PC-3 (cell line): ENCODE measurements at regions of chr19 and their contacts with region 1.

Region 1: DNA sequence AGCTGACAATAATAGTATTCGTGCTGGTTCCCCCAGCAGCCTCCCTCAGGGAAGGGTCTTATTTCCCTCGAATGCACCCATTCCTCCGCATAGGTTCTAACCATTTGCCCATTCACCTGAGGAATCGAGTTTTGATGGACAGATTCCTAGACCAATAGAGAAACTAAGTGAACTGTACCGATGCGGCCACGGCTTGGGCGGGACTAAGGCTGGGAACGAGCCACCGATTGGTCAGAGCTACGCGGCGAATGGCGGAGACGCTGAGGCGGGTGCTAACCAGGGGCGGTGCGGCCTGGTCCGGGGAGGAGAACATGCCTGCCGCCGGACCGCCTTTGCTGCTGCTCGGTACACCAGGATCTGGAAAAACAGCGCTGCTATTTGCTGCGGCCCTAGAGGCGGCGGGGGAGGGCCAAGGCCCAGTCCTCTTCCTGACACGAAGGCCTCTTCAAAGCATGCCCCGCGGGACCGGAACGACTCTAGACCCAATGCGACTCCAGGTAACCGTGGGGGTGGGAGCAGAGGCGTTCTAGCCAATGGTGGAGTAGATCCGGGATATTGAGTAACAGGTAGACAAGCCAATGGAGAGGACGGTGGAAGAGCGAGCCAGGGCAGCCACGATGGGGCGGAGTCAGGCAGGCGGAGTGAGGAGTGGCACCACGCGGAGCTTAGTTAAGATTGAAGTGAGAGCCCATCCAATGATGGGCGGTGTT is at the start of gene SWSAP1:
- DNase-seq: peak; percentile 100
- ATAC-seq: peak; percentile 85
- H3K4me3 ChIP-seq: peak within 1 kb of the TSS; percentile 68
- H3K27ac ChIP-seq: peak within 1 kb of the TSS; percentile 79
- H3K4me1 ChIP-seq: peaks cover 49% of the 10 kb centered on the region
- H3K27me3 ChIP-seq: no peaks in the 10 kb centered on the region
- CTCF ChIP-seq: no peak
- total RNA-seq, gene SWSAP1: 5.2 and 6.1 TPM in 2 replicates

Region 2: DNA sequence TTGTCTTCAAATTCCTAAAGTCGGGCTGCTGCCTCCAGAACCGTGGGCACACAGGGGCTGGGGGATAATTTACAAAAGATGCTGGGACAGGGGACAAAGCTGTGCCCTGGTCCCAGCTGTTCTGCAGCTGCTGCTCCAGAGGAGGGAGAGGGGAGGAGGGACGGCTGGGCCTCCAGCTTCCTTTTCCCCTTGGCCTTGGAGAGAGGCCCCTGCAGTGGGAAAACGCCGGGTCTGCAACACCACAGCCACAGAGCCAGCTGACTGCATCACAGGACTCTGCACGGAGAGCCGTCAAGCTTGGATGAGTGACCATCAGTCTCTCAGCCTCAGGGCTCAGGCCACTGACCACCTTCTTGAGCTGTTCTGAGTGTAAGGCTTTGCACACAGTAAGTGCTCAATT is 118.4 kb before region 1 on chr19:
- CTCF ChIA-PET with region 1: no interaction called
- POLR2A ChIA-PET with region 1: no interaction called
- intact Hi-C with region 1: no loop called
- DNase-seq: no peak
- ATAC-seq: no peak
- H3K4me3 ChIP-seq: no peak overlapping the region
- H3K27ac ChIP-seq: no peak overlapping the region
- H3K4me1 ChIP-seq: no peaks in the 10 kb centered on the region
- H3K27me3 ChIP-seq: no peaks in the 10 kb centered on the region
- CTCF ChIP-seq: no peak

Region 3: DNA sequence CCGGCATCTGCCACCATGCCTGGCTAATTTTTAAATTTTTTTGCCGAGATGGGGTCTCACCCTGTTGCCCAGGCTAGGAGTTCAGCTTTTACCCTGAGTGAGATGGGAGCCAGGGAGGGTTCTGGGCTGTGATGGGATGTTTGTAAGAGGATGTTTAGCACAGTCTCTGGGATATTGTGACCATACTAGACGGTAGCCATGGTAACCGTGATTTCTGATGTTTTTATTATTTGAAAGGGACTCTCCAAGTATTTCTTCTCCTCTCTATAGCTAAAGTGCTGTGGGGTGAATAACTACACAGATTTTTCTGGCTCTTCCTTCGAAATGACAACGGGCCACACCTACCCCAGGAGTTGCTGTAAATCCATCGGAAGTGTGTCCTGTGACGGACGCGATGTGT is 68.3 kb before region 1 on chr19:
- CTCF ChIA-PET with region 1: no interaction called
- POLR2A ChIA-PET with region 1: no interaction called
- intact Hi-C with region 1: no loop called
- DNase-seq: no peak
- ATAC-seq: no peak
- H3K4me3 ChIP-seq: no peak overlapping the region
- H3K27ac ChIP-seq: no peak overlapping the region
- H3K4me1 ChIP-seq: no peaks in the 10 kb centered on the region
- H3K27me3 ChIP-seq: no peaks in the 10 kb centered on the region
- CTCF ChIP-seq: no peak

Region 4: DNA sequence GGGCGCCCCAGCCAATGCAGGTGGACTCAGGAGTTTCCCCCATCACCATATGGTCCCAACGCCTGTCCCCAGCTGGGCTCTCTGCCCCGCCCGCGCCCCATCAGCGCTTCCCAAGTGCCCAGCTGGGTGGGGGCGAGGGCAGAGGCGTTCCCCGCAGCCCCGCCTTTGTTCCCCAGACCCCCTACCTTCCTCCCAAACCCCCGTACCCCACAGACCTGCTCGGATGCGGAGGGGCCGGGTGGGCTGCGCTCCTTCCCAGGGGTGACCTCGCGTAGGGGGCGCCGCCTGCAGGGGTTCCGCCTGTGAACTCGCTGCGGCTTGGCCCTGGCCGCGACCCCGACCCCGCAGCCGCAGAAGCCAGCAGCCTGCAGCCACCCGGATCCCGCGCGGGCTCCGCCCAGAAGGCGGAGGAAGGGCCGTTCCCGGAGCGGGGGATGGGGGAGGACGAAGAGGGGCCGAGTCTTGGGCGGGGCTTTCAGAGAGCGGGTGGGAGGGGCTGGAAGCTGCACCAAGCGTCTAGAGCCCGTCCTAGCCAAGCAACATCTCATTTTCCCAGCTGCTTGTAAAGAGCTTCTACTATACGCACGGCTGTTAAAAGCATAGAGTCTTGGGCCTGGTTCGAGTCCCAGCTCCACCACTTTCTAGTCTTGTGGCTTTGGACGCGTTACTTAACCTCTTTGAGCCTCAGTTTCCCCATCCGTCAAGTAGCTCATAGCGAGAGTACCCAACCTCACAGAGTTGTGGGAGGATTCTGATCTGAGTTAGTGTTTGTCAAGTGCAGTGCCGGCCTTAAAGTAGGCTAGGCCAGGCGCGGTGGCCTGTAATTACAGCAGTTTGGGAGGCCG is 35.1 kb before region 1 on chr19 and contains the start of gene RAB3D:
- CTCF ChIA-PET with region 1: interaction called, 8 read pairs
- POLR2A ChIA-PET with region 1: interaction called, 5 read pairs
- intact Hi-C with region 1: loop called (anchors 1 kb)
- DNase-seq: peak; percentile 95
- ATAC-seq: peak; percentile 89
- H3K4me3 ChIP-seq: peak within 1 kb of the TSS; percentile 89
- H3K27ac ChIP-seq: peak within 1 kb of the TSS; percentile 11
- H3K4me1 ChIP-seq: peaks cover 25% of the 10 kb centered on the region
- H3K27me3 ChIP-seq: no peaks in the 10 kb centered on the region
- CTCF ChIP-seq: no peak
- total RNA-seq, gene RAB3D: 34.4 and 37.9 TPM in 2 replicates

Region 5: DNA sequence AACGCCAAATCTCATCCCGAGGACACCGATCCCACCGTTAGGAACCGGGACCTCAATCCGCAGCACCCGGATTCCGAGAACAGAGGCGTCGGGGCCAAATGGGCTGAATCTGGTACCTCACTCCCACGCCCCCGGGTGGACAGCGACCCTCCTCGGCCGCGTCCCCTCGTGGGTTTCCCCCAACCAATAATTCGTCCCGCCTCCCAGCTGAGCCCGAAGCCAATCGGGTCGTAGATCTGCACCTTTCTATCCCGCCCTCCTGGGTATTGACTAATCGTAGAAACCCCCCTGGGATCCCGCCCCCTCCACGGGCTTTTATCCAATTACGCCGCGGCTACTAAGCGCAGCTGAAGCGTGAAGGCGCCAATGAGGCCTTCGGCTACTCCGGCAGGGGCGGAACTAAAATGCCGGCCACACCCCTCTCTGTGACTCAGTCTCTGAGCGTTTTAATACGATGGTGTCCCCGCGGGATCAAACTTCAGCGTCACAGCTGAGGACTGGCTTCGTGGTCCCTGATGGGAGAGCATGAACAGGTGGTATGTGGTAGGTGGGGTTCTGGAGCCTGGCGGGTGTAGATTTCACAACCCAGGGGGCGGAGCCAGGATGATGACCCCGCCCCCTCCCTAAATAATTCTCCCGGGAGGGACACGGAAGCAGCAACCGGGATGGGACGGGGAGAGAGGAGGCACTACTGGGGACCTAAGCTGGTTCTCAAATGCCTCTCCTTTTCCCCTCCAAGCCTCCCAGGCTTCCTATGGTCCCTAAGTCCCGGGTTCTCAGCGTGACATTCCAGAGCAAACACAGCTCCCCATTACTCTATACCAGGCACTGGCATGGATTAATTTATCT is 28.3 kb before region 1 on chr19 and contains the starts of genes CCDC159 and TMEM205:
- CTCF ChIA-PET with region 1: interaction called, 8 read pairs
- POLR2A ChIA-PET with region 1: interaction called, 6 read pairs
- intact Hi-C with region 1: loop called (anchors 1 kb)
- DNase-seq: peak; percentile 100
- ATAC-seq: peak; percentile 82
- H3K4me3 ChIP-seq: peak within 1 kb of the TSS; percentile 80
- H3K27ac ChIP-seq: peak within 1 kb of the TSS; percentile 72
- H3K4me1 ChIP-seq: peaks cover 36% of the 10 kb centered on the region
- H3K27me3 ChIP-seq: no peaks in the 10 kb centered on the region
- CTCF ChIP-seq: 0 out of 2 replicates have a peak, but pooled peaks have one; percentile 24
- total RNA-seq, gene CCDC159: 10.3 and 14.5 TPM in 2 replicates
- total RNA-seq, gene TMEM205: 202 and 224 TPM in 2 replicates

Region 6: GRCh38 chr19:11355160-11356073 is 19.2 kb before region 1 on chr19 and contains the start of gene PLPPR2:
- CTCF ChIA-PET with region 1: interaction called, 10 read pairs
- POLR2A ChIA-PET with region 1: interaction called, 4 read pairs
- intact Hi-C with region 1: no loop called
- DNase-seq: peak; percentile 98
- ATAC-seq: peak; percentile 97
- H3K4me3 ChIP-seq: peak within 1 kb of the TSS; percentile 90
- H3K27ac ChIP-seq: no peak within 1 kb of the TSS
- H3K4me1 ChIP-seq: peaks cover 8% of the 10 kb centered on the region
- H3K27me3 ChIP-seq: no peaks in the 10 kb centered on the region
- CTCF ChIP-seq: no peak
- total RNA-seq, gene PLPPR2: 38.0 and 51.2 TPM in 2 replicates

Region 7: GRCh38 chr19:11418549-11419506 is 44.2 kb after region 1 on chr19 and contains the start of gene RGL3:
- CTCF ChIA-PET with region 1: no interaction called
- POLR2A ChIA-PET with region 1: interaction called, 34 read pairs
- intact Hi-C with region 1: no loop called
- DNase-seq: peak; percentile 33
- ATAC-seq: peak; percentile 79
- H3K4me3 ChIP-seq: peak within 1 kb of the TSS; percentile 72
- H3K27ac ChIP-seq: no peak within 1 kb of the TSS
- H3K4me1 ChIP-seq: no peaks in the 10 kb centered on the region
- H3K27me3 ChIP-seq: no peaks in the 10 kb centered on the region
- CTCF ChIP-seq: no peak
- total RNA-seq, gene RGL3: 23.5 and 24.2 TPM in 2 replicates